GM23248 (cell line): ENCODE measurements at regions of chr16 and their contacts with region 1.

Region 1: GRCh38 chr16:19400697-19401096 is 17.0 kb upstream of the TMC5 start:
- DNase-seq: no peak
- H3K4me3 ChIP-seq: no peak overlapping the region
- H3K27ac ChIP-seq: no peak overlapping the region
- H3K4me1 ChIP-seq: no peaks in the 10 kb centered on the region
- H3K27me3 ChIP-seq: no peaks in the 10 kb centered on the region

Region 2: DNA sequence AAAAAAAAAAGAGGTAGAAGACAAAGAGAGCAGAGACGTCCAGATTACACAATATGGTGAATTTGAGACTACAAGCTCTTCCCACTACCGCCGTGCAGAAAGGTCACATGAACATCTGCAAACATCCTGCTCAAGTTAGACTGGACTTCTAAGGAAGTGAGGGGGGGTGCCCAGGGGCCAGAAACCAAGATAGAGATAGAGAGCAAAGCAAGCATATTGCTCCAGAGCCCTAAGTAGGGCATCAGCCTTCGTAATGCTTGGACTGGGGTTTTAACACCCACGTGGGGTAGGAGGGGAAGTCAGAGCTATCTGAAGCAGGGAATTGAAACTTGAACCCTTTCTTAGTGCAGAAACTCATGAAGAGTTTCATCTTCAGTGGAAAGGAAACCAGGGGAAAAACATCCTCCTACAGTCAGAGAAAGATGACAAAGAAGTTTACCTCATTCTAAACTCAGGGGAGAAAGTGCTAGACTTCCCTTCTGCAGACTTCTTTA is 106.5 kb before region 1 on chr16:
- in situ Hi-C with region 1: no loop called
- DNase-seq: no peak
- H3K4me3 ChIP-seq: no peak overlapping the region
- H3K27ac ChIP-seq: no peak overlapping the region
- H3K4me1 ChIP-seq: no peaks in the 10 kb centered on the region
- H3K27me3 ChIP-seq: no peaks in the 10 kb centered on the region

Region 3: GRCh38 chr16:19330841-19331397 is 69.8 kb before region 1 on chr16:
- in situ Hi-C with region 1: no loop called
- DNase-seq: peak; percentile 78
- H3K4me3 ChIP-seq: no peak overlapping the region
- H3K27ac ChIP-seq: no peak overlapping the region
- H3K4me1 ChIP-seq: peaks cover 8% of the 10 kb centered on the region; the same call in 1 of the 2 replicates
- H3K27me3 ChIP-seq: no peaks in the 10 kb centered on the region

Region 4: GRCh38 chr16:19348578-19349315 is 52.0 kb before region 1 on chr16:
- in situ Hi-C with region 1: loop called (anchors 10 kb)
- DNase-seq: peak; percentile 10
- H3K4me3 ChIP-seq: no peak overlapping the region
- H3K27ac ChIP-seq: no peak overlapping the region
- H3K4me1 ChIP-seq: no peaks in the 10 kb centered on the region
- H3K27me3 ChIP-seq: no peaks in the 10 kb centered on the region

Region 5: DNA sequence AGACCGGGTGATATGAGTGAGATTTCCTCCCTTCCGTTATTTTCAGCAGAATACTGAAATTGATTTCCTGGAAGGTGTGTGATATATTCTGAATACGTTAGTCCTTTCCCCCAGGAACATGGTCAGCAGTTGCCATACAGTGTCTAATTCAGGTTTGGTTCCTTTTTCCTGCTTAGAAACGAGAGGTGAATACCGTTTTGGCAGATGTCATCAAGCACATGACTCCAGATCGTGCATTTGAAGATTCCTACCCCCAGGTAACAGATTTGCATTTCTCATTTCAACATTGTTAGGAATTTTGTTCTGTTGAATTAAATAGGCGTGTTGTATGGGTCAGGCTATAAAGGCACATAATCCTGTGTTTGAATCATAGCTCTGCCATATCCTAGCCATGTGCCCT is 232.2 kb after region 1 on chr16:
- in situ Hi-C with region 1: no loop called
- DNase-seq: no peak
- H3K4me3 ChIP-seq: no peak overlapping the region
- H3K27ac ChIP-seq: no peak overlapping the region
- H3K4me1 ChIP-seq: no peaks in the 10 kb centered on the region
- H3K27me3 ChIP-seq: no peaks in the 10 kb centered on the region

Region 6: GRCh38 chr16:19666477-19666876 is 265.8 kb after region 1 on chr16:
- in situ Hi-C with region 1: no loop called
- DNase-seq: no peak
- H3K4me3 ChIP-seq: no peak overlapping the region
- H3K27ac ChIP-seq: no peak overlapping the region
- H3K4me1 ChIP-seq: no peaks in the 10 kb centered on the region
- H3K27me3 ChIP-seq: no peaks in the 10 kb centered on the region